A549 (cell line): ENCODE measurements at regions of chr17 and their contacts with region 1.

Region 1: GRCh38 chr17:81676906-81677305 is 6.7 kb downstream of the ARL16 start:
- DNase-seq: no peak
- ATAC-seq: peak; percentile 4 to 7; a peak in 4 of 6 replicates
- H3K4me3 ChIP-seq: no peak overlapping the region
- H3K27ac ChIP-seq: no peak overlapping the region
- H3K4me1 ChIP-seq: peaks cover 5% of the 10 kb centered on the region
- CTCF ChIP-seq: no peak
- EP300 ChIP-seq: no peak
- POLR2A ChIP-seq: no peak
- RAD21 ChIP-seq: no peak

Region 2: GRCh38 chr17:81608082-81608481 is 68.8 kb before region 1 on chr17:
- CTCF ChIA-PET with region 1: no interaction called
- POLR2A ChIA-PET with region 1: no interaction called
- DNase-seq: no peak
- ATAC-seq: 0 out of 6 replicates have a peak, but pooled peaks of 1 of the 2 experiments have one; percentile 21
- H3K4me3 ChIP-seq: no peak overlapping the region
- H3K27ac ChIP-seq: no peak overlapping the region
- H3K4me1 ChIP-seq: no peaks in the 10 kb centered on the region
- CTCF ChIP-seq: no peak
- EP300 ChIP-seq: no peak
- POLR2A ChIP-seq: no peak
- RAD21 ChIP-seq: no peak

Region 3: GRCh38 chr17:81666342-81667191 is 10.3 kb before region 1 on chr17 and contains the starts of genes CCDC137 and OXLD1:
- CTCF ChIA-PET with region 1: interaction called, 20 read pairs
- POLR2A ChIA-PET with region 1: interaction called, 23 read pairs
- DNase-seq: peak; percentile 97 to 98
- ATAC-seq: peak; percentile 96 to 99
- H3K4me3 ChIP-seq: peak within 1 kb of the TSS; percentile 99
- H3K27ac ChIP-seq: peak within 1 kb of the TSS; percentile 97 to 99
- H3K4me1 ChIP-seq: peaks cover 22% of the 10 kb centered on the region
- CTCF ChIP-seq: no peak
- EP300 ChIP-seq: no peak
- POLR2A ChIP-seq: peak; percentile 97
- RAD21 ChIP-seq: no peak
- polyA plus RNA-seq, gene CCDC137: 16.6 and 22.6 TPM in 2 replicates
- polyA plus RNA-seq, gene OXLD1: 34.6 and 38.7 TPM in 2 replicates

Region 4: GRCh38 chr17:81693509-81694210 is 16.8 kb after region 1 on chr17:
- CTCF ChIA-PET with region 1: interaction called, 54 read pairs
- POLR2A ChIA-PET with region 1: no interaction called
- DNase-seq: no peak
- ATAC-seq: peak; percentile 31 to 45; a peak in 3 of 6 replicates
- H3K4me3 ChIP-seq: no peak overlapping the region
- H3K27ac ChIP-seq: no peak overlapping the region
- H3K4me1 ChIP-seq: no peaks in the 10 kb centered on the region
- CTCF ChIP-seq: peak; percentile 24; the same call in 2 of the 3 replicates
- EP300 ChIP-seq: no peak
- POLR2A ChIP-seq: no peak
- RAD21 ChIP-seq: peak in 1 of 2 experiments; percentile 45; a peak in 1 of 5 replicates

Region 5: GRCh38 chr17:81702971-81703746 is 26.3 kb after region 1 on chr17 and contains the start of gene MRPL12:
- CTCF ChIA-PET with region 1: interaction called, 17 read pairs
- POLR2A ChIA-PET with region 1: interaction called, 6 read pairs
- DNase-seq: peak; percentile 96
- ATAC-seq: peak; percentile 83 to 90
- H3K4me3 ChIP-seq: peak within 1 kb of the TSS; percentile 90
- H3K27ac ChIP-seq: peak within 1 kb of the TSS; percentile 97 to 98
- H3K4me1 ChIP-seq: peaks cover 22% of the 10 kb centered on the region
- CTCF ChIP-seq: no peak
- EP300 ChIP-seq: no peak; a peak in 1 of 5 replicates
- POLR2A ChIP-seq: peak; percentile 91
- RAD21 ChIP-seq: no peak
- polyA plus RNA-seq, gene MRPL12: 152 and 161 TPM in 2 replicates

Region 6: DNA sequence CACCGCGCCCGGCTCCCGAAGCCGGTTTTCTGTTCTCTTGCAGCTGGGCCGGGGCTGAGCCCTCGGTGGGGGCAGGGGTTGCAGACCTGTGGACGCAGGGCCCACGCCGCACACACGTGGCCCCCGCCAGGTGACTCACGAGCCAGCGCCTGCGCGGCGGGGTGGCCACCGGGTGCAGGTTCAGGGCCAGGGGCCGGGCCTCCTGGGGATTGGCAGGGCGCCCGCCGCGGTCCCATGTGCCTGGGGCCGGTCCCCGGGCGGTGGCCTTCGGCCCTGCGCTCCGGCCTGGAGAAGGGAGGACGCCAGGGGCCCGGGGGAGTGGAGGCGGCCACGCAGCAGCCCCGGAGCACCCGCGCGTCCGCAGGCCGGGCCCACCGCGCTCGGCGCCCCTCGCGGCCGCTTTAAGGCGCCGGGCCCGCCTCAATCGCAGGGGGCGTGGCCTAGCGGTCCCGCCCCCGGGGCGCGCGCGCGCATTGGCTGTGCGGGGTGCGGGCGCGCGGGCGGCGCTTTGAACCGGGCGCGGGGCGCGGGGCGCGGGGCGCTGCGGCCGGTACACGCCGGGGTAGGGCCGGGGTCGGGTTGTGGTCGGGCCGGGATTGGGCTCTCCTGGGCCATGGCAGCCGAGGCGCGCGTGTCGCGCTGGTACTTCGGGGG is 35.0 kb after region 1 on chr17 and contains the start of gene SLC25A10:
- CTCF ChIA-PET with region 1: interaction called, 10 read pairs
- POLR2A ChIA-PET with region 1: no interaction called
- DNase-seq: peak; percentile 87 to 89
- ATAC-seq: peak; percentile 60 to 65
- H3K4me3 ChIP-seq: peak within 1 kb of the TSS; percentile 70
- H3K27ac ChIP-seq: peak within 1 kb of the TSS; percentile 95
- H3K4me1 ChIP-seq: peaks cover 20% of the 10 kb centered on the region
- CTCF ChIP-seq: no peak
- EP300 ChIP-seq: no peak
- POLR2A ChIP-seq: peak; percentile 36; the same call in 1 of the 2 replicates
- RAD21 ChIP-seq: no peak
- polyA plus RNA-seq, gene SLC25A10: 20.0 and 25.8 TPM in 2 replicates